B cell (primary cell): ENCODE measurements at regions of chr14 and their contacts with region 1.

Region 1: DNA sequence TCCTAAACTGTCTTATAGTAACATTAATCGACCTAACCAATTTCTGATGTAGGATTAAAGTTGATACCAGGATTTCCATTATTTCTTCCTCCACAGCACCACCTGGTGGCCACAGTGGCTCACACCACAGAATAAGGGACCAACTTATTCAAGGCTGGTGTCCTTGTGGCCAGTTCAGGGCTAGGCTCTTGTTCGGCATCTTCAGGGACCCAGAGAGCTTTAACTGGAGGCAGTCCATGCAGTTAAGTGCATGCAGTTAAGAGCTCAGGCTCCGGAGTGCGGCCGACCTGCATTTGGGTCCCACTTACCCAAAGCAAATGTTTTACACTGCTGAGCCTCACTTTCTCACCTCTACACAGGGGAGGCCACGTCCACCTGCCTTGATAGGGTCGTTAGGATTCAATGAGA is 42.0 kb upstream of the GPR68 start:
- DNase-seq: peak; percentile 79
- ATAC-seq: peak; percentile 79
- H3K4me3 ChIP-seq: no peak overlapping the region
- H3K4me3 Mint-ChIP-seq: no peak overlapping the region
- H3K27ac ChIP-seq: no peak overlapping the region
- H3K27ac Mint-ChIP-seq: peak overlapping the region; percentile 72
- H3K4me1 ChIP-seq: peaks cover 20 to 21% of the 10 kb centered on the region in 2 donors
- H3K4me1 Mint-ChIP-seq: peaks cover 23% of the 10 kb centered on the region
- H3K27me3 ChIP-seq: no peaks in the 10 kb centered on the region
- H3K27me3 Mint-ChIP-seq: no peaks in the 10 kb centered on the region
- CTCF ChIP-seq: peak; percentile 96

Region 2: DNA sequence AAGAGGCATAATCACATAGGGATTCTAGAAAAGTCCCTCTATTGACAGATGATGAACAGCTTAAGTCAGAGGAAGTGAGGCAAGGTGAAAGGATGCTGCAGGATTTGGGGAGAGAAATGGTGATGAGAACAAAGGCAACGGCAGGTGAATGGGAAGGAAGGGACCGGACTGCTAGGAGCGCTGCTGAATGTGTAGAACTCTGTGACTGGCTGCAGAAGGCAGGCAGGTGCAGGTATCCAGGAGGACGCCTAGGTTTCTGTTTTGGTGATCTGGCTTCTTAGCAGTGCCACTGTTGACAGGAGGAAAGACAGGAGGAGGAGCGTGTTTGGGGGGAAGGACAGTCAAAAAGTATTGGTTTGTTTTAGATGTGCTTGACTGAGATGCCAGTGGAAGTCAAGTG is 411.9 kb before region 1 on chr14:
- CTCF ChIA-PET with region 1: no interaction called
- POLR2A ChIA-PET with region 1: no interaction called
- intact Hi-C with region 1: no loop called
- DNase-seq: no peak
- ATAC-seq: no peak
- H3K4me3 ChIP-seq: no peak overlapping the region
- H3K4me3 Mint-ChIP-seq: no peak overlapping the region
- H3K27ac ChIP-seq: no peak overlapping the region
- H3K27ac Mint-ChIP-seq: no peak overlapping the region
- H3K4me1 ChIP-seq: no peaks in the 10 kb centered on the region
- H3K4me1 Mint-ChIP-seq: no peaks in the 10 kb centered on the region
- H3K27me3 ChIP-seq: no peaks in the 10 kb centered on the region
- H3K27me3 Mint-ChIP-seq: no peaks in the 10 kb centered on the region
- CTCF ChIP-seq: no peak

Region 3: DNA sequence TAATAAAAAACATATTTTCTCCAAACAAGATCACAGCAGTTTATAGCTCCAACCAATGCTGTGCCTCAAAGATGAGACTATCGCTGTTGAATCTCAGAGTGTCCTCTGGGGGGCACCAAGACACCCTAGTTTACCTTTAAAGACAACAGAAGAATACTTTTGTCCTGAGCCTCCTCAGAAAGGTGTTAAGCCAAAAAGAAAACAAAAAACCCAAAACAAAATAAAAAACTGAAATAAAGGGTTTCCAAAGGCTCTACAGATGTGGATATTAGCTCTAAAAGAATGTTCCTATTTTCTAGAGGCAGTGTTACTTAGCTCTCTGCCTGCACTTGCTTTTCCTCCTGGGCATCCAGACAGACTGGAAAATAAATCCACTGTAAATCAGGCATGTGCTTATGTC is 383.4 kb before region 1 on chr14:
- CTCF ChIA-PET with region 1: interaction called, 35 read pairs
- POLR2A ChIA-PET with region 1: no interaction called
- intact Hi-C with region 1: loop called (anchors 1 kb)
- DNase-seq: peak; percentile 68
- ATAC-seq: peak; percentile 69
- H3K4me3 ChIP-seq: no peak overlapping the region
- H3K4me3 Mint-ChIP-seq: no peak overlapping the region
- H3K27ac ChIP-seq: no peak overlapping the region
- H3K27ac Mint-ChIP-seq: peak overlapping the region; percentile 46
- H3K4me1 ChIP-seq: peaks cover 5 to 8% of the 10 kb centered on the region in 2 donors
- H3K4me1 Mint-ChIP-seq: peaks cover 15% of the 10 kb centered on the region
- H3K27me3 ChIP-seq: no peaks in the 10 kb centered on the region
- H3K27me3 Mint-ChIP-seq: no peaks in the 10 kb centered on the region
- CTCF ChIP-seq: peak; percentile 87

Region 4: DNA sequence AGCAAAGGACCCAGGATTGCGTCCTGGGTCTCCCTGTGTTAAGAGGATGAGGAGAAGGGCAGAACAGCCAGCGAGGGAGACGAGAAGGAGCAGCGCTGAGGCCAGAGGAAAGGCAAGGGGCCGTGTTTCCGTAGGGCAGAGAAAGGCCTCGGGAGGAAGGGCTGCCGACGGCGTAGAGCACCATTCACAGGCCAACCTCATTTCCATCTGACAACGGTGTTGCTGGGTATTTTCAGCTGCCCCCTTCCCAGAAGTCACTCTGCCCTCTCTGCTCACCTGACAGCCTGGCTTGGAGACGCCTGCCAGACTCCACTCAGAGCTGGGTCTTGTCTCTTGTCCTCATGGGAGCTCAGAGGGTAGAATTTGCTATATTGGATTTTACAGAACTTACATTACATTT is 93.5 kb before region 1 on chr14:
- CTCF ChIA-PET with region 1: interaction called, 14 read pairs
- POLR2A ChIA-PET with region 1: interaction called, 7 read pairs
- intact Hi-C with region 1: no loop called
- DNase-seq: no peak
- ATAC-seq: no peak
- H3K4me3 ChIP-seq: no peak overlapping the region
- H3K4me3 Mint-ChIP-seq: no peak overlapping the region
- H3K27ac ChIP-seq: no peak overlapping the region
- H3K27ac Mint-ChIP-seq: no peak overlapping the region
- H3K4me1 ChIP-seq: no peaks in the 10 kb centered on the region
- H3K4me1 Mint-ChIP-seq: no peaks in the 10 kb centered on the region
- H3K27me3 ChIP-seq: no peaks in the 10 kb centered on the region
- H3K27me3 Mint-ChIP-seq: no peaks in the 10 kb centered on the region
- CTCF ChIP-seq: no peak

Region 5: DNA sequence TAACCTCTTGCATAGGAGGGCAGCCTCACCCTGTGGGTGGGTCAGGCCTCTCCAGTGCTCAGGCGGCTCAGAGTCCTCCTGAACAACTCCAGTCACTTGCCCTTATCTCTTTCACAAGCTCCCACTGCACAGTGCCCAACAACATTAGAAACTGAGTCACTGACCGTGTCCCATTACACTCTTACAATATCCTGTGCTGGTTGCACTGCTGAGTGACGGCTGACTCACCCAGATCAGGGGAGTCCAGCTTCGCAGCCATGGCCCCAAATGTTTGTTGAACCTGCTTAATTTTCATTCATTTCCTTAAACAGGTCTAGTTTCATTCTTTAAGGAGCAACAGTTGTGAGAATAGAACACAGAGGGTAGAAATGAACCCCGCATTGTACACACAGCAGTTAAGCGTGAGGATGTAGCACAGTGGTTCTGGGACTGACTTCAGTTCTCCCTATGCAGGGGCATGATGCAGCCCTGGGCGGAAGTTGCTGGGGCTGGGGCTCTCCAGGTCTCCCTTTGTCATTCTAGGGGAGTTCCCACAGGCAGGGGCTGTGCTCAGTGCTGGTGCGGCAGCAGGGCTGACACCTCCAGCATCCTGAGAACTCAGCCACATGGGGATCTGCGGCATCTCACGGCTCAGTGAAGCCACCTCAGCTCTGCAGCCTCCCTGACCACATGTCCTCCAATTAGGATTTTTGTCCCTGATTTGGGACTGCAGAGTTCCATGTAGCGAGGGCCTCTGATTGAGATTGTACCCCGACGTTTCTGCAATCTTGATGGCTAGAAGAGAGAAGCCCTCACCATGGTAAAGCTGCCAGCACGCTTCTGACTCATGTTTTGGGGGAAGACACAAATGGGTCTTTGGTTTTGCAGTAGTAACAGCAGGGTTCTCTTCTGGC is 58.2 kb before region 1 on chr14:
- CTCF ChIA-PET with region 1: interaction called, 3 read pairs
- POLR2A ChIA-PET with region 1: no interaction called
- intact Hi-C with region 1: loop called (anchors 1 kb)
- DNase-seq: peak; percentile 71
- ATAC-seq: peak; percentile 75
- H3K4me3 ChIP-seq: no peak overlapping the region
- H3K4me3 Mint-ChIP-seq: peak overlapping the region; percentile 38
- H3K27ac ChIP-seq: peak overlapping the region; percentile 22 to 59
- H3K27ac Mint-ChIP-seq: peak overlapping the region; percentile 71
- H3K4me1 ChIP-seq: peaks cover 70 to 73% of the 10 kb centered on the region in 2 donors
- H3K4me1 Mint-ChIP-seq: peaks cover 68% of the 10 kb centered on the region
- H3K27me3 ChIP-seq: no peaks in the 10 kb centered on the region
- H3K27me3 Mint-ChIP-seq: no peaks in the 10 kb centered on the region
- CTCF ChIP-seq: no peak

Region 6: GRCh38 chr14:91303091-91303923 is 16.8 kb after region 1 on chr14:
- CTCF ChIA-PET with region 1: interaction called, 11 read pairs
- POLR2A ChIA-PET with region 1: no interaction called
- intact Hi-C with region 1: no loop called
- DNase-seq: peak; percentile 50
- ATAC-seq: peak; percentile 91
- H3K4me3 ChIP-seq: no peak overlapping the region
- H3K4me3 Mint-ChIP-seq: no peak overlapping the region
- H3K27ac ChIP-seq: peak overlapping the region in 1 of 2 donors; percentile 45
- H3K27ac Mint-ChIP-seq: no peak overlapping the region
- H3K4me1 ChIP-seq: peaks cover 0 to 4% of the 10 kb centered on the region in 2 donors
- H3K4me1 Mint-ChIP-seq: peaks cover 9% of the 10 kb centered on the region
- H3K27me3 ChIP-seq: no peaks in the 10 kb centered on the region
- H3K27me3 Mint-ChIP-seq: no peaks in the 10 kb centered on the region
- CTCF ChIP-seq: no peak